GM13976 (cell line): ENCODE measurements at regions of chr4 and their contacts with region 1.

Region 1: DNA sequence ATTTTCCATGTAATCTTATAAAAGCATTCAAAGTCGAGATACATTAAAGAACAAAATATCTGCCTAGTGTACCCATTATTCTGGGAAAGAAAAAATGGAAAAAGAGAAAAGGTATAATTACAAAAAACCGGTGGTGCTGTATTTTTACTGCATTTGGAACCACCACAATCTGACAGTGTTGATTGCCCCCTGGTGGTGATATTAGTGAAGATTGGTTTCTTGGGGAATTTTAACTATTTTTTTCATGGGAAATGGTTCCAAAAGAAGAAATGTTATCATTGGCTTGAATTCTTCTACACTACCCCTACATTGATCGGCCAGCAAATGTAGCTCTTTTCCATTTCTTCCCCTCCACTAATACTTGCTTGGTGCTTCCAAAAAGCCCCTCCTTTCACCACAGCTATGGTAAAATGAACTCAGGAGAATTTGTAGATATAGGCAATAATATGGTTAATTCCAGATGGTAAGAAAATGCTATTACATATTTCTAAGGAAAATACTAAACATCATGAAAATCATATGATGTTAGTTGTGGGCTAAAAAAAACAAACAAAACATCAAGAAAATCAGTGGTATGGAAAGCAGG is 50.0 kb downstream of the COX18 start:
- DNase-seq: peak; percentile 41
- CTCF ChIP-seq: peak; percentile 47

Region 2: DNA sequence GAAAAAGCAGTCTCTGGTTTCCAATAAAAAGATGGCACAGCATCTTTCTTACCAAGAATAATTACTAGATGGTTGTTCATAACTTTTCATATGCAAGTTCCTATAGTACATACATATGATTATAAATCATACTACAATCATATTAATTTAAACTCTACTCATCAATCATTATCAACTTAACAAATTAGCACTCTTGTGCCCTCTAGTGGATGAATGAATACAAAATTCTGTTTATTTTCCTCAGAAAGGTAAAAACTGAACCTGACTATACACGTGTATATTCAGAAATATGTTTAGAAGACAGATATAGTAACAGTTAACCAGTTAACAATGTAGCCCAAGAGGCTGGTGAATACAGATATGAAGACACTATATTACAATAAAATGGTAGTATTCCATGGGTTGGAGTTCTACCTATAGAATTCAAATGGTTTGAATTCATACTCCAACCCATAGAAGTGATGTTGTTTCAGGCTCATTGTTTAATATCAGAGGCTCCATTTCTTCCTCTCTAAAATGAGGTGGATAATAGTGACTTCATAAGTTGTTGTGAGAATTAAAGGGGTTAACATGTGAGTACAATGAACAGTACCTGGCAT is 550.6 kb before region 1 on chr4:
- in situ Hi-C with region 1: no loop called
- DNase-seq: no peak
- CTCF ChIP-seq: peak; percentile 20

Region 3: GRCh38 chr4:72505314-72505744 is 514.2 kb before region 1 on chr4:
- in situ Hi-C with region 1: loop called (anchors 10 kb)
- DNase-seq: peak; percentile 15
- CTCF ChIP-seq: peak; percentile 37

Region 4: GRCh38 chr4:72604324-72604723 is 415.2 kb before region 1 on chr4:
- in situ Hi-C with region 1: no loop called
- DNase-seq: no peak
- CTCF ChIP-seq: no peak